ENCODE measurements at regions of chr20 and their contacts with region 1.

Region 1: GRCh38 chr20:21529863-21530262 is 16.0 kb upstream of the NKX2-2 start:
- DNase-seq: no peak
- H3K4me3 Mint-ChIP-seq: no peak overlapping the region
- H3K27ac Mint-ChIP-seq: no peak overlapping the region
- H3K4me1 Mint-ChIP-seq: peaks cover 3% of the 10 kb centered on the region
- H3K27me3 Mint-ChIP-seq: peaks cover 64% of the 10 kb centered on the region

Region 2: GRCh38 chr20:21515300-21516179 is 14.3 kb before region 1 on chr20:
- CTCF ChIA-PET with region 1: no interaction called
- POLR2A ChIA-PET with region 1: no interaction called
- DNase-seq: no peak
- H3K4me3 Mint-ChIP-seq: no peak overlapping the region
- H3K27ac Mint-ChIP-seq: no peak overlapping the region
- H3K4me1 Mint-ChIP-seq: peaks cover 21% of the 10 kb centered on the region
- H3K27me3 Mint-ChIP-seq: peaks cover 82% of the 10 kb centered on the region

Region 3: DNA sequence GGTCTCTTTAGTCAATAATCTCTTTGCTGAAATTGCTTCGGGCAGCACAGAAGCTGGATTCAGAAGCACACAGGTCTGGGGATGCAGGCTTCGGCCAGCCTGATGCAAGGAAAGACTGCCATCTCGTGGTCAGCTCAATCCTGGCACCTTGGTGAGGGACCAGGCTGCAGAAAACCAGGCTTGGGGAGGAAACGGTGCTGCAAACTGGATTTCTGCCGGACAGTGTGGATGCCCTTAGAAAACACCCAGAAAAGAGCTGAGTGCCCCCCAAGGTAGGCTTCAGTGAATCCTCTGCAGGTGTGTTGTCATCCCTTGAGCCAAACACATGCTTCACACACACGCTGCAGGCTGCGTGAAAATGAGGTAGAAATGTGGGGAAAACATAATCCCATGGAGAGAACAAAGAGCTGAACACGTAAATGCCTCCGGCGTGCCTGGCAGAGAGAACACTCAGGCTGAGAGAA is 85.8 kb after region 1 on chr20:
- CTCF ChIA-PET with region 1: interaction called, 11 read pairs
- POLR2A ChIA-PET with region 1: no interaction called
- DNase-seq: peak; percentile 50
- H3K4me3 Mint-ChIP-seq: no peak overlapping the region
- H3K27ac Mint-ChIP-seq: no peak overlapping the region
- H3K4me1 Mint-ChIP-seq: peaks cover 4% of the 10 kb centered on the region
- H3K27me3 Mint-ChIP-seq: peaks cover 7% of the 10 kb centered on the region